Calu3 (cell line): ENCODE measurements at regions of chr18 and their contacts with region 1.

Region 1: DNA sequence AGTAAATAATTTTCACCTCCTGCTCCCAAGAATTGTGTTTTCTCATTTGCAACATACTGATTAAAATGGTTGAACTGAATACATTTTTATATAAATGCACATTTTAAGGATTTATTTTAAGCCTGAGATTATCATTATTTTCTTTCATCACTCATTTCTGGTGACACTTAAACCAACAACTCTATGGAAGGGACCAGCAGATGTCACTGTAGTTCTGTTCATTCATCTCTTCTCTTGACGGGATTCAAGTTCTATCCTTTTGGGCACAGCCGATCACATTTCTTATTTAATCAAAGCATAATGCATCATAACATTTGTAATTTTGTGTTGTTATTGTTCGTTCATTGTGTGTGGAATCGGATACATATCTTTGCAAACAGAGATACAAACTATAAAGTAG is 417.9 kb downstream of the HRH4 start:
- DNase-seq: no peak
- H3K4me3 Mint-ChIP-seq: no peak overlapping the region
- H3K27ac Mint-ChIP-seq: no peak overlapping the region
- H3K4me1 Mint-ChIP-seq: no peaks in the 10 kb centered on the region
- H3K27me3 Mint-ChIP-seq: peaks cover 80% of the 10 kb centered on the region
- CTCF ChIP-seq: no peak

Region 2: DNA sequence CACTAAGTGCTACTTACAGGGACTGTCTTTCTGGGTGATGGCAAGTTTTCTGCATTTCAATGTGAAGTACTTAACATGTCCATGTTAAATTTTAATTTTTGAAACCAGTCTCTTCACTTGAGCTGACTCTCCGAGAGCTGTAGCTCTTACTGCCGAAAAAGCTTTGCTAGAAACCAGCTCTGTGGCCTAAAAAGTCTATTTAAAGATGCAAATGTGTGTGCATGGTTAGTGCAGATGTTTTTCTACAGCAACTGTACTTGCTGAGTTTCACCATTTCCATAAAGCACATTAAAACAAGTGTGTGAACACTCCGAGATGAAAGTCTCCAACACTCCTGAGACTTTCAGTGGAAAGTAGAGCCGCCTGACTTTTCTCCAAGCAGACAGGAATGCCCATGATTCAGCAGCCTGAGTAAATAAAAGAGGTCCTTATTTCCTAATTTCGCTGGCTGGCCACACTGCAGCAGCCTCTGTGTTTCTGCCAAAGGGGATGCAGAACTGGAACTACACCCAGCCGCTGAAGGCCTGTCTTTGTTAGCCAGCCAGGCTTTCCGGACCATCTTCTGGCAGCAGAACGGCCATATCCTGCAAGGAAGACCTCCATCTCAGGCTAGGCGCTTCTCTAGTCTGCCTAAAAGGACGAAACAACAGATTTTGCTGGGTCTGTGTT is 352.5 kb after region 1 on chr18:
- CTCF ChIA-PET with region 1: no interaction called
- intact Hi-C with region 1: no loop called
- DNase-seq: no peak
- H3K4me3 Mint-ChIP-seq: no peak overlapping the region
- H3K27ac Mint-ChIP-seq: no peak overlapping the region
- H3K4me1 Mint-ChIP-seq: no peaks in the 10 kb centered on the region
- H3K27me3 Mint-ChIP-seq: peaks cover 57% of the 10 kb centered on the region
- CTCF ChIP-seq: no peak

Region 3: DNA sequence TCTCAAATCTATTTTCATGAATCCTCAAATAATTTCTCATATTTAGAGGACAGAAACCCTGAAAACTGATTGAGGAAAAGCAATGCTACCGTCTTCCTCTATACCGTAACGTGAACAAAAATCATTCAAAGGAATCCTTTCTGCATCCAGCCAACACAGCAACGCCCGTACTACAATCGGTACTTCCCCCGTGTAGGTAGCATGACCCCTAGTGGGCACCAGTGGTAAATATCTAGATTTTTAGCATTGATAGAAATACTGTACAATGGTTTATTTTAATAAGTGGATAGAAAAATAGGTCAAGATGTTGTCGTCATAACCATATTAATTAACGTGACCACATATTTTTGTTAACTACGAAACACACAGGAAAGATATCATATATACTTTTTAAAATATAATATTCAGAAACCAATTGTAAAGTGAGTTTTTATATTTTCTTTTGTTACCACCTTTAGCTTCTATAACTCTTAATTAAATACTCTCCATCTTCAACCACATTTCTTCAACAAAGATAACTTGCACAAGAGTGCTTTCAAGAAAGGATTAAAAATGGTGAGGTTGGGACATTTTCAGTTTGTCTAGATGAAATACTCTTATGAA is 1018.0 kb after region 1 on chr18:
- CTCF ChIA-PET with region 1: no interaction called
- intact Hi-C with region 1: loop called (anchors 10 kb)
- DNase-seq: peak; percentile 24
- H3K4me3 Mint-ChIP-seq: no peak overlapping the region
- H3K27ac Mint-ChIP-seq: no peak overlapping the region
- H3K4me1 Mint-ChIP-seq: no peaks in the 10 kb centered on the region
- H3K27me3 Mint-ChIP-seq: peaks cover 97% of the 10 kb centered on the region
- CTCF ChIP-seq: peak; percentile 48